Stomach (tissue), 19 donors: ENCODE measurements at regions of chrX and their contacts with region 1.

Region 1: GRCh38 chrX:148984238-148984637 is 483.8 kb downstream of the AFF2 start:
- DNase-seq: no peak
- H3K4me3 ChIP-seq: no peak overlapping the region
- H3K27ac ChIP-seq: no peak overlapping the region
- H3K4me1 ChIP-seq: no peaks in the 10 kb centered on the region
- H3K27me3 ChIP-seq: no peaks in the 10 kb centered on the region
- CTCF ChIP-seq: no peak
- EP300 ChIP-seq: no peak
- POLR2A ChIP-seq: no peak

Region 2: GRCh38 chrX:148649145-148649795 is 335.0 kb before region 1 on chrX:
- intact Hi-C with region 1: no loop called
- DNase-seq: no peak
- H3K4me3 ChIP-seq: no peak overlapping the region
- H3K27ac ChIP-seq: no peak overlapping the region
- H3K4me1 ChIP-seq: no peaks in the 10 kb centered on the region
- H3K27me3 ChIP-seq: no peaks in the 10 kb centered on the region
- CTCF ChIP-seq: no peak
- EP300 ChIP-seq: no peak
- POLR2A ChIP-seq: no peak

Region 3: DNA sequence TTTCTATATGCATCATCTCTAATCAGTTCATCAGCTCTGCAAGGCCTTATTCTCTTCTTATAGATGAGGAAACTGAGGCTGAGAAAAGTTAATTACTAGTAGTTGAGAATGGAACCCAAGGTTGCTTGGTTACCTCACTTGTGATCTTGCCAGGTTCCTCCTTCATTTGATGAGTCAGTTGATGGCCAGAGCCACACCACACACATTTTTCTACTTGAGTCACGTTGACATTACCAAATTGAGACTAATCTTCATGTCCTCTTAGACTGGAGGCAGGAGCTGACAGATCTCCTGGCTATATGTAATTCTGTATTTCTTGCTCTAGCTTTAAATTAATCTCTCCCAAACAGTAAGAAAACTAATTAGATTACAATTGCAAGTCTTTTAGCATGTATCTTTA is 55.4 kb before region 1 on chrX:
- intact Hi-C with region 1: loop called (anchors 10 kb)
- DNase-seq: no peak
- H3K4me3 ChIP-seq: no peak overlapping the region
- H3K27ac ChIP-seq: no peak overlapping the region
- H3K4me1 ChIP-seq: no peaks in the 10 kb centered on the region
- H3K27me3 ChIP-seq: no peaks in the 10 kb centered on the region
- CTCF ChIP-seq: no peak
- EP300 ChIP-seq: no peak
- POLR2A ChIP-seq: no peak